HEK293 (cell line): ENCODE measurements at regions of chr17 and their contacts with region 1.

Region 1: GRCh38 chr17:77957857-77958715 is at the start of gene TNRC6C:
- H3K4me3 ChIP-seq: peak within 1 kb of the TSS; percentile 79
- H3K27ac ChIP-seq: peak within 1 kb of the TSS; percentile 89; the same call in 1 of the 2 replicates
- H3K4me1 ChIP-seq: peaks cover 16% of the 10 kb centered on the region
- CTCF ChIP-seq: peak; percentile 45; the same call in 1 of the 2 replicates

Region 2: DNA sequence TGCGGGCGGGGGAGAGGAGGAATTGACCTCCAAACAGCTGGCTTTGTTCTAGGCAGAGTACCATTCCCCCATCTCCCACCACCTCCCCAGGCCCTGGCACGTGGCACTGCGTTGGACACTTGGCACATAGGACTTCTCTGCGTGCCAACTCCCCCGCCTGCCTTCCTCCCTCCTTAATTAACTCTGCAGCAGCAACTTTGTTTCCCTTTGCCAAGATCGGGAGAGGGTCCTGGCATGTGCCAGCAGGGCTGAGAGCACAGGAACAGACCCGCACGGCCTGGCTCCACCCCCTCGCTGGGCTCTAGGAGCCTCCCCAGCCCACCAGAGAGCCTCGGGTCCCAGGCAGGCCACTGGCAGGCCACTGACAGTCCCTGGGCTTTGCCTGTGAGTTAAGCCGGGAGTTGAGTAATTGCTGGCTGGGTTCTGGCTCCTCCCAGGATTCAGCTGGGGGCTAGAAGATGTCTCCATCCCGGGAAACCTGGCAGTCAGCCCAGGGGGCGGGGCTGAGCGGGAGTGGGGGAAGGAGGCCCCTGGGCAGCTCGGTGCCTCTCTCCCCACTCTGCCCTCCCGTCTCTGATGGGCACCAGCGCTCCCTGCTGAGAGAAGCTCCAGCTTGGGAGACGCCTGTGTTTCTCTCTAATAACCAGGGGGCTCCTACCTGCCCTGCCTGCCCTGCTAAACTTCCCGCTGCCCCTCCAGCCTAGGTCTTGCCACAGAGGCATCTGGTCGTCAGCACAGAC is 223.6 kb before region 1 on chr17:
- CTCF ChIA-PET with region 1: no interaction called
- POLR2A ChIA-PET with region 1: interaction called, 26 read pairs
- H3K4me3 ChIP-seq: no peak overlapping the region; the same call in 1 of the 2 replicates
- H3K27ac ChIP-seq: peak overlapping the region; percentile 89
- H3K4me1 ChIP-seq: peaks cover 18% of the 10 kb centered on the region
- CTCF ChIP-seq: no peak; the same call in 1 of the 2 replicates

Region 3: DNA sequence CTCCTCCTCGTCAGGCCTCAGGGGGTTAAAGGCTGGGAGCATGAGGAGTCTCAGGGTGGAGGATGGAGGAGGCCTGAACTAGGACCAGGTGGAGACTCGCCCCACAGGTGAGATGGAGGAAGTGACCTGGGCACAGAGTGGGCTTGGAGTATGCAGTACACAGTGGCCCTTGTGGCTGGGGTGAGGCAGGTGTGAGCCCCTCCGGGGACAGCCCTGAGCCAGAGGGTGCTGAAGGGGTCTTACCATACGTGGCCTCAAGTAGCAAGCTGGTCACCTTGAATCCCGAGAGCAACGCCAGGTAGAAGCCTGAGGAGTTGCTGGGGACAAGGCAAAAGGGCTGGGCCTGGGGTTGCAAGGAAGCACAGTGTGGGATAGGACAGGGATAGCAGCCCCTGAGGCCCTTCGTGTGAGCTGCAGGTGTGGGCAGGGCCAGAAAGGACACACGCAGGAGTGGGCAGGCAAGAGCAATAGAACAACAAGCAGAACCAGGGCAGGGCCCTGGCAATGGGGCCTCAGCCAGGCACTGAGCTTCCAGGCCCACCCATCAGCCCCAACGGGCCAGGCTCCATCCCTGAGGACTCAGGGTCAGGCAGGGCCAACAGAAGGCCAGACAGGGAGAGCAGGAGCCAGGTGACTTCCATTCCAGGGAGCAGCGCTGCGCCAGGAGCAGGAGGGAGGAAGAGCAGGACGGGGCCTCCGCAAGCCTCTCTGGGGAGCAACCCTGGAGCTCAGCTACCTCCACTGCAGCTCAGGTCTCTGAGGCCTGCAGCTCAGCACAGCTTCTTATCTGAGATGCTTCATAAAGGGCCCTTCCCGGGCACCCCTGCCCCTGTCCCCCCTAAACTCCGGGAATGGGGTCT is 63.7 kb before region 1 on chr17:
- CTCF ChIA-PET with region 1: interaction called, 5 read pairs
- POLR2A ChIA-PET with region 1: interaction called, 14 read pairs
- H3K4me3 ChIP-seq: no peak overlapping the region
- H3K27ac ChIP-seq: no peak overlapping the region
- H3K4me1 ChIP-seq: no peaks in the 10 kb centered on the region
- CTCF ChIP-seq: no peak

Region 4: DNA sequence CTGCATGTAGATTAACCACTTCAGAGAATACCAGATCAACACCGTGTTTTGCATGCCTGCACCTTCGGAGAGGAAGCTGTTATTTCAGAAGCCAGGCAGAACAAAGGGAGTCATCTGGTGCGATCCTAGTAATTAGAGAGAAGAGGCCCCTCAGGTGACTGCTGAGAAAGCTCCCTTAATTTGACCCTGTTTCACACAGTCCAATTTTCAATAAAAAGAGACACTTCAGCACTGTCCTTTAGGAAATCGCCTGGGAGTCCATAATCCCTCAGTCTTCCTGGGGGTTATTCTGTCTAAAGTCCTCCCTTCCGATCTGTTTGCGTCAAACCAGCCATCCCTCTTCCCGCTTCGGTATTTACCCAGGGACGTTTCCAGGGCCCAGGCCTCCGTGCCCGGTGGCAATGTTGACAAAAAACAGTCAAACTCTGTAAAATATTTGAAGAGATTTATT is 22.9 kb before region 1 on chr17:
- CTCF ChIA-PET with region 1: interaction called, 3 read pairs
- POLR2A ChIA-PET with region 1: interaction called, 30 read pairs
- H3K4me3 ChIP-seq: no peak overlapping the region
- H3K27ac ChIP-seq: no peak overlapping the region
- H3K4me1 ChIP-seq: peaks cover 7% of the 10 kb centered on the region
- CTCF ChIP-seq: no peak

Region 5: GRCh38 chr17:77995146-77995852 is 37.2 kb after region 1 on chr17:
- CTCF ChIA-PET with region 1: no interaction called
- POLR2A ChIA-PET with region 1: interaction called, 13 read pairs
- H3K4me3 ChIP-seq: no peak overlapping the region
- H3K27ac ChIP-seq: no peak overlapping the region
- H3K4me1 ChIP-seq: peaks cover 14% of the 10 kb centered on the region; the same call in 1 of the 2 replicates
- CTCF ChIP-seq: no peak

Region 6: GRCh38 chr17:78019367-78019975 is 61.4 kb after region 1 on chr17:
- CTCF ChIA-PET with region 1: interaction called, 28 read pairs
- POLR2A ChIA-PET with region 1: interaction called, 51 read pairs
- H3K4me3 ChIP-seq: no peak overlapping the region
- H3K27ac ChIP-seq: no peak overlapping the region
- H3K4me1 ChIP-seq: no peaks in the 10 kb centered on the region
- CTCF ChIP-seq: 0 out of 2 replicates have a peak, but pooled peaks have one; percentile 13

Region 7: GRCh38 chr17:78341559-78342448 is 383.7 kb after region 1 on chr17:
- CTCF ChIA-PET with region 1: no interaction called
- POLR2A ChIA-PET with region 1: no interaction called
- H3K4me3 ChIP-seq: peak overlapping the region; percentile 14
- H3K27ac ChIP-seq: no peak overlapping the region; the same call in 1 of the 2 replicates
- H3K4me1 ChIP-seq: peaks cover 6% of the 10 kb centered on the region; the same call in 1 of the 2 replicates
- CTCF ChIP-seq: no peak